Sciatic nerve (tissue), 2 donors: ENCODE measurements at regions of chr10 and their contacts with region 1.

Region 1: GRCh38 chr10:101214446-101215396 is 14.5 kb downstream of the LBX1 start:
- DNase-seq: peak; percentile 78
- ATAC-seq: peak; percentile 81

Region 2: DNA sequence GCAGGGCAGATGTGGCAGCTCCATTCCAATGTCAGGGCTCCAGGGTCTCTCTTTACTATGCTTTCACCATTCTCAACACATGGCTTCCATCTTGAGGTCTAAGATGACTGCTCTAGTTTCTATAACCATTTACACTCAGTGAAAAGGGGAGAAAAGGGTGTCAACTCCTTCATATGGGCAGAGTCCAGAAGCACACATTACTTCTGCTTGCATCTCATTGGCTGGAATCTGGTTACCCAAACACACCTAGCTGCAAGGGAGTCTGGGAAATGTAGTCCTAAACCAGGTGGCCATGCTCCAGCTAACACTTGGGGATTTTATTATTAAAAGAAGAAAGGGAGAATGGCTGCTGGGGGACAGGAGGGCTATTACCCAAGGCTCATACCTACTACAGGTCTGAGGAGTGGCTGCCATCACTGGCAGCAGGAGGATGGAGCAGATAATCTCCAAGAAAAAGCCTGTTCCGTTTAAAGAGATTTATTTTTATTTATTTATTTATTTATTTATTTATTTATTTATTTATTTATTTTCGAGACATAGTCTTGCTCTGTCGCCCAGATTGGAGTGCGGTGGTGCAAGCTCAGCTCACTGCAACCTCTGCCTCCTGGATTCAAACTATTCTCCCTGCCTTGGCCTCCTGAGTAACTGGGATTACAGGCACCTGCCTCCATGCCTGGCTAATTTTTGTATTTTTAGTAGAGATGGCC is 43.6 kb after region 1 on chr10:
- intact Hi-C with region 1: no loop called
- DNase-seq: no peak
- ATAC-seq: no peak

Region 3: DNA sequence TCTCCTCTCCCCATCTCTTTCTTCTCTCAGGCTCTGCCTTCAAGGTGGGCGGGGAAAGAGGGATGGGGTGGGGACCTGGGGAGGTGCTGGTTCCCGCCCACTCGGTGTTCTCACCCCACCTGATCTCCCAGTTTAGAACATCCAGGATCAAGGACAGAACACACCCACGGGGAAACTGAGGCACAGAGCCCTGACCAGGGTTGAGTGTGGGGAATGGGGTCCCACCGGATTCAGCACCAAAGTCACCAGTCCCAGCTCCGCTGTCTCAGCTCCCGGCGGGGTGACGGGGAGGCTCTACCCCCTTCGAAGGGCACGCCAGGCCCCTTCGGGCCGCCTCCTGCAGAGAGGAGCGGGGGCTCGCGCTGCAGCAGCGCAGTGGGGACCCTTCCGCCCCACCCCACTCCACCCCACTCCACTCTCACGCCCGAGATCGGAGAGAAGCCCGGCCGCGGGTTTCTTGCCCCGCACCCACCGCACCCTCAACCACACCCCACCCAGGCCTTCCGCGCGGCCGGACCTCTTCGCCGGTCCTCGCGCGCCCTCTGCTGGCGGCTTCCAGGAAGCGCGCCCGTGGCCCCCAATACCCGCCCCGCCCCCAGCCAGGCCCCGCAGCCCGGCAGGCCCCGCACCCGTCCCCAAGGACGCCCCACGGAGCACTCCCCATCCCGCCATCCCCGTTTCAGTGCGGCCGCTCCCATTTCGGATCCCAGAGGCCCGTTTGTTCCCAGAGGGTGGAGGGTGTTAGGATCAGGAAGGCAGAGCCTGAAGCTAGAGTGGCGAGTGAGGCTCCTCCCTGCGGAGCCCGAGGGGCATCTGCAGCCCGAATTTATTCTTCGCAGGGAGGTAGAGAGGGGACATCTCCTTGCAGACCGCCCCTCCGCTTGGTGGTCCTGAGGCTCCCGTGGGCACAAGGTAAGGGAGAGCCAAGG is 355.4 kb after region 1 on chr10:
- intact Hi-C with region 1: loop called (anchors 5 kb)
- DNase-seq: peak; percentile 90
- ATAC-seq: peak; percentile 91